Colonic mucosa (tissue), 4 donors: ENCODE measurements at regions of chrX and their contacts with region 1.

Region 1: GRCh38 chrX:46903458-46904242 is 8.6 kb upstream of the JADE3 start:
- DNase-seq: peak; percentile 72
- H3K4me3 ChIP-seq: peak overlapping the region; percentile 33
- H3K27ac ChIP-seq: no peak overlapping the region
- H3K4me1 ChIP-seq: no peaks in the 10 kb centered on the region
- H3K27me3 ChIP-seq: no peaks in the 10 kb centered on the region
- CTCF ChIP-seq: peak; percentile 64

Region 2: DNA sequence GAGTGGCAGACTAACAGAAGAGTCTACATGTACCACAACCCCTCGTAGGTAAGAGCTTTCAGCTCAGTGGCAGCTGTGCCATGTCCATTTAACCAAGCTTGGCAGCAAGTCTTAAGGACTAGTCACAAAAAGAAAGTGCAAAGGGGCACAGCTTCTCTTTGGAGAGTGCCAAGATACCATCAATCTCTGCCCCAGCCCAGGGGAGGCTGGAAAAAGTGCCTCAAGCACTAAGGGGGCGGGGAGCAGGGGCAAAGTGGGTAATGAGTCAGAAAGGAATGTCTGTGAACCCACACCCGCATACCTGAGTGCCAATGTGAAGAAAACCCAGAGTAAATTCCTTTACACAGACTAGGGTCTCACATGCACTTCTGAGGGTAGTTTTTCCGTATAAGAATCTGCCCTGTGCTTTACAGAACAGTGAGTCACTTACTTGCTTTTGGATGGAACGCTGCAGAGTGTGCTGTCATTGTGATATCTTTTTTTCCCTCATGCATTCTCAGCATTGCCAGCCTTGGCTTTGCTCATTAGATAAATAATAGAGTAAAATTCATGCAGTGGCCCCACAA is 578.3 kb before region 1 on chrX:
- intact Hi-C with region 1: no loop called
- DNase-seq: no peak
- H3K4me3 ChIP-seq: no peak overlapping the region
- H3K27ac ChIP-seq: no peak overlapping the region
- H3K4me1 ChIP-seq: no peaks in the 10 kb centered on the region
- H3K27me3 ChIP-seq: no peaks in the 10 kb centered on the region
- CTCF ChIP-seq: no peak

Region 3: GRCh38 chrX:46984705-46985104 is 81.1 kb after region 1 on chrX:
- intact Hi-C with region 1: loop called (anchors 5 kb)
- DNase-seq: no peak
- H3K4me3 ChIP-seq: no peak overlapping the region
- H3K27ac ChIP-seq: no peak overlapping the region
- H3K4me1 ChIP-seq: no peaks in the 10 kb centered on the region
- H3K27me3 ChIP-seq: no peaks in the 10 kb centered on the region
- CTCF ChIP-seq: no peak

Region 4: GRCh38 chrX:47030339-47030738 is 126.7 kb after region 1 on chrX:
- intact Hi-C with region 1: loop called (anchors 5 kb)
- DNase-seq: peak; percentile 21
- H3K4me3 ChIP-seq: no peak overlapping the region
- H3K27ac ChIP-seq: no peak overlapping the region
- H3K4me1 ChIP-seq: no peaks in the 10 kb centered on the region
- H3K27me3 ChIP-seq: no peaks in the 10 kb centered on the region
- CTCF ChIP-seq: peak; percentile 46